Calu3 (cell line): ENCODE measurements at regions of chr4 and their contacts with region 1.

Region 1: DNA sequence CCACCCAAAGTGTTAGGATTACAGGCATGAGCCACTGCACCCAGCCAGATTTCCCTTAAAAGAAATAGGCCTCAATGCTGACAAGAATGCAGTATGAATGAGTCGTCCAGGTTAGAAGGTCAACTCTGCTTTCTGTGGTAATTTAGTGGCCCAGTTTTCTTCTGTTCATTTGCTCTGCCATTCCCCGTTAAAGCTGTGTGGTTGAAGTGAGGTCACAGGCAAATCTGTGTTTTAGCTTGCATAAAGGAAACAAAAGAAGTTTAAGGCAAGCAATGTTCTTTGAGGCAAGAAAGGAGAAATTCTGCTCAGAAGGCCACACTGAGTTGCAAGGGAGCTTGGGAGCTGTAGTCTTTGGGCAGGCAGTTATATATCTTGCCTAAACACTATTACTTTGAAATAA is 176.8 kb downstream of the LARP7 start:
- DNase-seq: no peak
- H3K4me3 Mint-ChIP-seq: no peak overlapping the region
- H3K27ac Mint-ChIP-seq: no peak overlapping the region
- H3K4me1 Mint-ChIP-seq: peaks cover 12% of the 10 kb centered on the region
- H3K27me3 Mint-ChIP-seq: no peaks in the 10 kb centered on the region
- CTCF ChIP-seq: no peak

Region 2: GRCh38 chr4:113349430-113349829 is 535.6 kb after region 1 on chr4:
- CTCF ChIA-PET with region 1: interaction called, 15 read pairs
- intact Hi-C with region 1: no loop called
- DNase-seq: no peak
- H3K4me3 Mint-ChIP-seq: no peak overlapping the region
- H3K27ac Mint-ChIP-seq: no peak overlapping the region
- H3K4me1 Mint-ChIP-seq: no peaks in the 10 kb centered on the region
- H3K27me3 Mint-ChIP-seq: peaks cover 19% of the 10 kb centered on the region
- CTCF ChIP-seq: no peak